ENCODE measurements at regions of chr13 and their contacts with region 1.

Region 1: GRCh38 chr13:81872581-81872980 is 1531.7 kb upstream of the SPRY2 start:
- DNase-seq: peak in 1 of 2 experiments; percentile 3
- H3K4me3 ChIP-seq: no peak overlapping the region
- H3K27ac ChIP-seq: no peak overlapping the region
- H3K4me1 ChIP-seq: no peaks in the 10 kb centered on the region
- H3K27me3 ChIP-seq: no peaks in the 10 kb centered on the region
- CTCF ChIP-seq: peak; percentile 51

Region 2: DNA sequence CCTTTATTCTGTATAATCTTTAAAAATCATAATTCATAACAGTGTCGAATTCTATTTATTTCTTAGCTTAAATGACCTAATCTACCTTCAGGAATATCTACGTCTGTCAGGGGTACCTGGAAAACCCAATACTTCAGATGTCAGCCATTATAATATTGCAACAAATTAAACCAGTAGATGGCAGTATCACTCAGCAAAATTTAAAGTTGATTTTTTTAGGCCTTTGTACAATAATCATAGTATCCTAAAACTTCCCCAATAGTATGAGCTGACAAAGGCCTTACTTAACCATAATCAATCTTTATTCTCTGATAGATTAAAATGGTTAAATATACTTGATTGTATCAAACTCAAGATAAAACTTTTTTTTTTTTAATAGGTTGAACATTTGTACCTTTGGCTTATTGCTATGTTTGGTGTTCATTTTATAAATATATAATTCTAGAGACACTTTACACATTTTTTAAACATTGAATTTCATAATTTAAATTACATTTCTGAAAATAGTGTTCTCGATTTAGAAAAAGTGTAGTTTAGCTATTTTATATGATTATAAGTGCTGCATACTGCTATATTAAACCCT is 701.4 kb before region 1 on chr13:
- CTCF ChIA-PET with region 1: no interaction called
- POLR2A ChIA-PET with region 1: no interaction called
- intact Hi-C with region 1: loop called (anchors 2 kb)
- DNase-seq: no peak
- H3K4me3 ChIP-seq: no peak overlapping the region
- H3K27ac ChIP-seq: no peak overlapping the region
- H3K4me1 ChIP-seq: no peaks in the 10 kb centered on the region
- H3K27me3 ChIP-seq: no peaks in the 10 kb centered on the region
- CTCF ChIP-seq: peak; percentile 73

Region 3: DNA sequence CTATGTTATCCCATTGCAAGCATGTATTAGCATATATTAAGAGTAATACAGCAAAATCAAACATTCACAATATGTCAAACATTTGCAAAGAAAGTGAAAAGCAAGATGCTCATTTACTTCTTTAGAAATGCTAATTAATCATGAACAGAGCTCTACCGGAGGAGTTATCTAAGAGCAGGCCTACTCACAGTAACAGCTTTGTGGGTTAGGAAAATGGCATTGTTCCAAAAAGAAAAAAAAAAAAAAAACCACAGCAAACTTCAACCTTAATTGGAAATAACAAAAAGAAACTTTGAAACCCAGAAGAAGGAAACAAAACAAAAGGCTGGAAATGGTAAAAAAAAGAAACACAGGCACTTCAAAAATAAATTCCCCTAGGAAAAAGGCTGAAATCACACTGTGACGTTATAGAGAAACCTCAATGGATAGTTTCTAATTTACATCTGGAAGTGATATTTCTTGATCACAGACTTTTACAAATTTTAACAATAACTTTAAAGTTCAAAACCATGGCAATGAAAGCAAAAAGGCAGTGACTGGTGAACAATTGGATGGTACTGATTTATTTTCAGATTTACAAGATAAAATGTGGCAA is 294.9 kb before region 1 on chr13:
- CTCF ChIA-PET with region 1: no interaction called
- POLR2A ChIA-PET with region 1: no interaction called
- intact Hi-C with region 1: no loop called
- DNase-seq: no peak
- H3K4me3 ChIP-seq: no peak overlapping the region
- H3K27ac ChIP-seq: no peak overlapping the region
- H3K4me1 ChIP-seq: no peaks in the 10 kb centered on the region
- H3K27me3 ChIP-seq: no peaks in the 10 kb centered on the region
- CTCF ChIP-seq: no peak

Region 4: DNA sequence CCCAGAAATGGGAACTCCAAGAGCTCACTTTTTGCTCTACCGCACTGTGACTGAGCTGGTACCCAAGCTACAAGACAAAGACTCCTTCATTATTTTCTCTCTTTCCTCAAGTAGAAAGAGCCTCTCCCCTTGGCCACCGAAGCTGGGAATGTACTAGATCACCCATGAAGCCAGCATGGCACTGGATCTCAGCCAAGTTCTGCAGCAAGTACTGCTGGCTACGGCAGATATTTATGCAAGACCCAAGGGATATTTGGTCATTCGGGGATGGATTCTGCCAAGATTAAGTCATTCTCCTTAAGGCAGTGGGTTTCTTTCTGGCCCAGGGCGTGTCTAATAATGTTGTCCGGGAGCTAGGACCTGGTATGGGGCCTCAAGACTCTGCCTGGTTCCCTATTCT is 1376.2 kb after region 1 on chr13:
- CTCF ChIA-PET with region 1: no interaction called
- POLR2A ChIA-PET with region 1: no interaction called
- intact Hi-C with region 1: no loop called
- DNase-seq: no peak
- H3K4me3 ChIP-seq: no peak overlapping the region
- H3K27ac ChIP-seq: no peak overlapping the region
- H3K4me1 ChIP-seq: no peaks in the 10 kb centered on the region
- H3K27me3 ChIP-seq: no peaks in the 10 kb centered on the region
- CTCF ChIP-seq: no peak

Measured in PC-9 (cell line).